ENCODE measurements at regions of chr7 and their contacts with region 1.

Region 1: DNA sequence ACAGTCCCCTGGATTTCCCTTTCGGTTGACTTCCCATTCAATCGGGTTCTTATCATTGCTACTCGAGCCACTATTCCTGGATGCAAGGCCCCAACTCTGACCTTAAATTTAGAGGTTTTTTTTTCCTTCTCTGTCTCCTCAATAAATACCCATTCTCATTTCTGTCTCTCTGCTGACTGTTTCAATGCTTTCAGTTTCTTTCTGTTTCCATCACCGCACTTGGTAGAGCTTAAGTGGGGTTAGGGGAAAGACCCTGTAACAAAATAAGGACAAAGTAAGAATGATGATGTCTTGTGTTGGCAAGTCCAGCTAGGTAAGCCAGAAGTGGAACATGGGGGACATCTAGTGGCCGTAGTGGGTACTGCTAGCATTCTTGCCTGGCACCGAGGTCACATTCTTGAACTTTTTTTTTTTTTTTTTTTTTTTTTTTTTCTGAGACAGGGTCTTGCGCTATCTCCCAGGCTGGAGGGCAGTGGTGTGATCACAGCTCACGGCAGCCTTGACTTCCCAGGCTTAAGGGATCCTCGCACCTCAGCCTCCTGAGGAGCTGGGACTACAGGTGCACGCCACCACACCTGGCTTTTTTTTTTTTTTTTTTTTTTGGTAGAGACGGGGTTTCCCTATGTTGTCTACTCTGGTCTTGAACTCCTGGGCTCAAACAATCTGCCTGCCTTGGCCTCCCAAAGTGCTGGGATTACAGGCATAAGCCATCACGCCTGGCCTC is 40.3 kb downstream of the ZC3HC1 start:
- DNase-seq: peak; percentile 63 to 92
- H3K4me3 ChIP-seq: no peak overlapping the region
- H3K4me1 ChIP-seq: peaks cover 4% of the 10 kb centered on the region
- H3K27me3 ChIP-seq: no peaks in the 10 kb centered on the region

Region 2: DNA sequence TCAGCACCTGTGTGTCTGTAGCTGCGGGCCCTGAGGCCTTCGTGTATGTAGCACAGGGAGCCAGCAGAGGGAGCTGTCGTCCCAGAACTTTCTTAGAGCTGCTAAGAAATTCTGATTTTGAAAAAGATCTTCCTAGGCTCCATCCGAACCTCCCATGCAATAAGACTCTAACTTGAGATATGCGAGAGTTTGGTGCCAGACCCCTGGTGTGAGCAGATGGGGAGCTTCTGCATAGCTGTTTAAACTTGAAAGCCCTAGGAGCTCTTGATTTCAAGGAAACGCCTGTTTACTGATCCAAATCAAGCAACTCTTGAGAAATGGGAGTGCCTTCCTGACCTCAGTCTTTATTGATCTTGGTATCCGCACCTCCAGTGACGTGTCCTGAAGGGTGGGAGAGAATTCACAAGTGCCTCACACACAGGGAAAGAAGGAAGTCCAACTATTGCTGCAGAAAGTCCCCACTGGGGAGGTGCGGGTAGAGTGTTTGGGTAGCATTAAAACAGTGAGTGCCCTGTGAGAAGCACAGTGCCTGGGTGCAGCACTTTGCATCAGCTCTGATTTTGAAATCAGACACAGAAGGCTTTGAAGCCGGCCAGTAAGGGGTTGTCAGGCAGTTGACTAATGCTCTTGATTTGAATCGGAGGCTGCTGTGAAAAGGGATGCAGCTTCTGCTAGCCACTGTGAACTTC is 643.0 kb before region 1 on chr7:
- in situ Hi-C with region 1: loop called (anchors 25 kb)
- DNase-seq: peak; percentile 60 to 84
- H3K4me3 ChIP-seq: no peak overlapping the region
- H3K4me1 ChIP-seq: peaks cover 10% of the 10 kb centered on the region
- H3K27me3 ChIP-seq: no peaks in the 10 kb centered on the region

Region 3: GRCh38 chr7:129494041-129494440 is 516.8 kb before region 1 on chr7:
- in situ Hi-C with region 1: loop called (anchors 25 kb)
- DNase-seq: no peak
- H3K4me3 ChIP-seq: no peak overlapping the region
- H3K4me1 ChIP-seq: peaks cover 8% of the 10 kb centered on the region
- H3K27me3 ChIP-seq: no peaks in the 10 kb centered on the region

Region 4: DNA sequence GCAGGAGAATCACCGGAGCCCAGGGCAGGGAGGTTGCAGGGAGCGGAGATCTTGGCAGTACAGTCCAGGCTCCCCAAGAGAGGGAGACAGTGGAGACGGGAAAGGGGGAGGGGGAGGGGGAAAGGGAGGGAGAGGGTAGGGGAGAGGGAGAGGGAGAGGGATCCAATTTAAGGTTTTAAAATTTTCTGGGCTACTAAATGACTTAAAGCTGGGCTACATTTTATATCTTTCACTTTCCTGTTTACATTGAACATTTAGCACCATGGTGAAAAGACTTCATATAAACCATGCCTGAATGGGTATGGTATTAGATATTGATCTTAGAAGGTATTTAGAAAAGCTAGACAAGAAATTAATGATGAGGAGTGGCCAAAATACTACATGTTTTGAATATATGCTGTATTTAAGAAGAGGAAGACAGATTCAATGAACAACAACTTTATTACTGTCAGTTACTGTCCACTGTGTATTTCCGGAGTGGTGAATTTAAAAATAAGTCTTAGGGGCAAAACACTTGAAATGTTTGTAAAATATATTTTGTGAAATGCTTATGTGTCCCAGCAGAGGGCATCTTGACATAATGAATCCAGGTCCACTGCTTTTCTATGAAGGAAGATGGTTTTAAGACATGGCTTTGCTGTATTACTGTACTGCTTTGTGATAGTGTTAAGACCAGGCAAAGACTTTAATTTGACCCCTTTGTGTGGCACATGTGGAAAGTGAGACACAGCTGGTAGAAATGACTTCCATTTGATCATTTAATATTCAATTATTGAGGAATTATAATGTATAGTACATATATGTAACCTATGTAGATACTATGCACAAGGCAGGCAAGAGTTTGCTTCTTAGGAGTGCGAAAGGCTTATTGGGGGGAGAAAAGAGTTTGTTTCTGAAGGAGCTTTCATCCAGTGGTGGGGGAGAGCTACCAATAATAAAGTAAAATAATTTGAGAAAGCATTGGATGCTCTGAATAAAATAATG is 346.5 kb before region 1 on chr7:
- in situ Hi-C with region 1: loop called (anchors 10 kb)
- DNase-seq: peak in 1 of 2 experiments; percentile 74
- H3K4me3 ChIP-seq: no peak overlapping the region
- H3K4me1 ChIP-seq: no peaks in the 10 kb centered on the region
- H3K27me3 ChIP-seq: no peaks in the 10 kb centered on the region

Region 5: DNA sequence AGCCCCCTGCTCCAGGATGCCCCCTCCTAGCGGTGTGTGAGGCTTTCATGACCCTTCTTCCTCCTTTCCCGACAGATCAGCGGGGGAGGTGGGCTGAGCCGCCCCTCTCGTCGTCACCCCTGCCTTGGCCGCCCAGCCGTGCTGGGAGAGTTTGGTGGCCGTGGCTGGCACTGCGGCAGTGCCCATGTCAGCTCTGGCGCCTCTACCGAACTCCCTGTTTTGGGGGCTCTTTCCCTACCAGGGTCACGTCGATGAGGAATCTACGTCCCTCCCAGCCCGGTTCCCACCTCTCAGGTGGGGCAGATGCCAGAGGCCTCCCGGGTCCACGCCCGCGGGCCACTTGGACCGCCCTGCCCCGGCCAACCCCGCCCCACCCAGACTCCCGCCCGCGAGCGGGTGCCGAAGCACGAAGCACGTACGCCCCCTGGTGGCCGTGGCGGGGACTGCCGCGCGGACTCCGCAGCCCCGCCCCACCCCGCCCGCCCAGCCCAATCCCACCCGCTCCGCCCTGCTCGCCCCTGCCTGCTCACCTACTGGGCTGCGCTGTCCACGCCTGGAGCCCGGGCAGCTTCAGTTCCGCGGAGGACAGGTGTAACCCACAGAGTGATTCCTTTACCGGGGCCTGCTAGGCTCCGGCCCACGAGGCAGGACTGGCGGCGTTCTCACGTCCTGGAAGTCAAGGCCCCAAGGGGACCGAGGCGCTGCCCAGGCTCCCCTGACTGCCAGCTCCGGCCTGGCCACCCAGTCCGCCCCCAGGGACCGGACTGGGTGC is 185.2 kb before region 1 on chr7:
- in situ Hi-C with region 1: loop called (anchors 5 kb)
- DNase-seq: peak; percentile 73 to 95
- H3K4me3 ChIP-seq: peak overlapping the region; percentile 52
- H3K4me1 ChIP-seq: peaks cover 22% of the 10 kb centered on the region
- H3K27me3 ChIP-seq: no peaks in the 10 kb centered on the region